Naive thymus-derived CD4-positive, alpha-beta T cell (primary cell): ENCODE measurements at regions of chr15 and their contacts with region 1.

Region 1: GRCh38 chr15:72339777-72340177 is 19.8 kb upstream of the CELF6 start:
- DNase-seq: no peak
- ATAC-seq: peak; percentile 67
- H3K4me3 ChIP-seq: no peak overlapping the region
- H3K4me3 Mint-ChIP-seq: no peak overlapping the region
- H3K27ac ChIP-seq: no peak overlapping the region
- H3K27ac Mint-ChIP-seq: peak overlapping the region in 2 of 9 donors; percentile 4 to 23
- H3K4me1 ChIP-seq: no peaks in the 10 kb centered on the region
- H3K4me1 Mint-ChIP-seq: peaks cover 0 to 6% (median 0%) of the 10 kb centered on the region in 7 donors
- H3K27me3 ChIP-seq: no peaks in the 10 kb centered on the region
- H3K27me3 Mint-ChIP-seq: no peaks in the 10 kb centered on the region

Region 2: GRCh38 chr15:72532991-72533601 is 193.3 kb after region 1 on chr15:
- CTCF ChIA-PET with region 1: no interaction called
- POLR2A ChIA-PET with region 1: no interaction called
- intact Hi-C with region 1: loop called in 1 of 2 experiments (anchors 1 kb)
- DNase-seq: peak in 7 of 9 donors; percentile 6 to 41 (median 30)
- ATAC-seq: peak; percentile 47
- H3K4me3 ChIP-seq: no peak overlapping the region
- H3K4me3 Mint-ChIP-seq: peak overlapping the region in 1 of 10 donors; percentile 58
- H3K27ac ChIP-seq: no peak overlapping the region
- H3K27ac Mint-ChIP-seq: peak overlapping the region in 1 of 9 donors; percentile 41
- H3K4me1 ChIP-seq: peaks cover 0 to 31% of the 10 kb centered on the region in 2 donors
- H3K4me1 Mint-ChIP-seq: peaks cover 27 to 87% (median 70%) of the 10 kb centered on the region in 7 donors
- H3K27me3 ChIP-seq: no peaks in the 10 kb centered on the region
- H3K27me3 Mint-ChIP-seq: no peaks in the 10 kb centered on the region

Region 3: DNA sequence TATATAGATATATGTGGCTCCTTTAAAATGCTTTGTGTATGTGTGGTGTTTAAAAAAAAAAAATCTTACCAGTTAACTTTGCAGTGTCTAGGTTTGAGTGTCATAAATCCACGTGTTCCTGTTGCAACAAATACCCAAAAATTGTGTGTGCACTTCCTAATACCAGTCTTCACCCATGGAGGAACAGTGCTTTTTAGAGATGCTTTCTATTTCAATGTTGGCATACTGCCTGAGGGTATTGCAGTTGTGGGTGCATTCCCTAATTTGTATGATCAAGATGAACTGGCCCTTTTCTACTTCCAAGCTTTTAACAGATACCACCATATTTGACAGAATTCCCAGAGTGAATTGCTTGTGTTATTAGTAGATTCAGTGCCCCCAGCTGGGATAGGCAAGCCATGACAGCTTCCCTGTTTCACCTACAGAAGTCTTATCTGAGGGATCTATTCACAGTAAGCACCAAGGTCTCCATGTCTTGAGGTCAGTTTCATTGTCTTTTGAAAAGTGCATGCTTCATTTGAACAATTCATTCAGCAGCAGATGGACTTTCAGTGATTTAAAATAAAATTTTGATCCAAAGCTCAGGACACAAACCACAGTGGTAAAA is 245.8 kb after region 1 on chr15:
- CTCF ChIA-PET with region 1: no interaction called
- POLR2A ChIA-PET with region 1: no interaction called
- intact Hi-C with region 1: loop called in 1 of 2 experiments (anchors 5 kb)
- DNase-seq: no peak
- ATAC-seq: no peak
- H3K4me3 ChIP-seq: no peak overlapping the region
- H3K4me3 Mint-ChIP-seq: no peak overlapping the region
- H3K27ac ChIP-seq: no peak overlapping the region
- H3K27ac Mint-ChIP-seq: peak overlapping the region in 4 of 9 donors; percentile 3 to 66 (median 15)
- H3K4me1 ChIP-seq: no peaks in the 10 kb centered on the region
- H3K4me1 Mint-ChIP-seq: peaks cover 0 to 18% (median 4%) of the 10 kb centered on the region in 7 donors
- H3K27me3 ChIP-seq: no peaks in the 10 kb centered on the region
- H3K27me3 Mint-ChIP-seq: no peaks in the 10 kb centered on the region

Region 4: DNA sequence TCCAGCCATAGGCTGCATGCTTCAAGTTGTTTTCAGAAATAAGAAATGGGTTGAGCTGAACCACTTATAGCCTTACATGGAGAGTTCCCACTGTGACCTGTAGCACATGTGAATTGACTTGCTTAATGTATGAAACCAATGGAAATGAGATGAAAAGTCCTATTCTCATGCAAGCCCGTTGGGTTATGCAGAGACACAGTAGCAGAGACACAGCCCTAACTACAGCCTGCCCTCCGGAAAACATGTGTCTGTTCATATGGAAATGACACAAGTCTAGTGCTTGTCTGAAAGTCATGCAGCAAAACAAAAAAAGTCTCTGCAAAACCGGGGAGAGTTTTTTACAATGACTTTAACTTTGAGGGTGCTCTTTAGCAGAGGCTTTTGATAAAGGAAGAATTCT is 331.8 kb after region 1 on chr15:
- CTCF ChIA-PET with region 1: no interaction called
- POLR2A ChIA-PET with region 1: no interaction called
- intact Hi-C with region 1: loop called in 1 of 2 experiments (anchors 10 kb)
- DNase-seq: no peak
- ATAC-seq: no peak
- H3K4me3 ChIP-seq: no peak overlapping the region
- H3K4me3 Mint-ChIP-seq: no peak overlapping the region
- H3K27ac ChIP-seq: no peak overlapping the region
- H3K27ac Mint-ChIP-seq: no peak overlapping the region
- H3K4me1 ChIP-seq: peaks cover 0 to 3% of the 10 kb centered on the region in 2 donors
- H3K4me1 Mint-ChIP-seq: peaks cover 0 to 10% (median 5%) of the 10 kb centered on the region in 7 donors
- H3K27me3 ChIP-seq: no peaks in the 10 kb centered on the region
- H3K27me3 Mint-ChIP-seq: peaks cover 5 to 25% (median 9%) of the 10 kb centered on the region in 5 donors

Region 5: GRCh38 chr15:73781038-73781925 is 1441.5 kb after region 1 on chr15:
- CTCF ChIA-PET with region 1: no interaction called
- POLR2A ChIA-PET with region 1: no interaction called
- intact Hi-C with region 1: no loop called
- DNase-seq: no peak
- ATAC-seq: no peak
- H3K4me3 ChIP-seq: no peak overlapping the region
- H3K4me3 Mint-ChIP-seq: no peak overlapping the region
- H3K27ac ChIP-seq: no peak overlapping the region
- H3K27ac Mint-ChIP-seq: no peak overlapping the region
- H3K4me1 ChIP-seq: no peaks in the 10 kb centered on the region
- H3K4me1 Mint-ChIP-seq: no peaks in the 10 kb centered on the region
- H3K27me3 ChIP-seq: no peaks in the 10 kb centered on the region
- H3K27me3 Mint-ChIP-seq: peaks cover 0 to 4% (median 0%) of the 10 kb centered on the region in 5 donors